PC-3 (cell line): ENCODE measurements at regions of chr1 and their contacts with region 1.

Region 1: GRCh38 chr1:186212544-186213226 is 162.4 kb downstream of the TPR start:
- DNase-seq: peak; percentile 82
- ATAC-seq: peak; percentile 82
- H3K4me3 ChIP-seq: no peak overlapping the region
- H3K27ac ChIP-seq: no peak overlapping the region
- H3K4me1 ChIP-seq: 0 out of 2 replicates have a peak, but pooled peaks cover 5% of the 10 kb centered on the region
- H3K27me3 ChIP-seq: no peaks in the 10 kb centered on the region
- CTCF ChIP-seq: peak; percentile 89

Region 2: DNA sequence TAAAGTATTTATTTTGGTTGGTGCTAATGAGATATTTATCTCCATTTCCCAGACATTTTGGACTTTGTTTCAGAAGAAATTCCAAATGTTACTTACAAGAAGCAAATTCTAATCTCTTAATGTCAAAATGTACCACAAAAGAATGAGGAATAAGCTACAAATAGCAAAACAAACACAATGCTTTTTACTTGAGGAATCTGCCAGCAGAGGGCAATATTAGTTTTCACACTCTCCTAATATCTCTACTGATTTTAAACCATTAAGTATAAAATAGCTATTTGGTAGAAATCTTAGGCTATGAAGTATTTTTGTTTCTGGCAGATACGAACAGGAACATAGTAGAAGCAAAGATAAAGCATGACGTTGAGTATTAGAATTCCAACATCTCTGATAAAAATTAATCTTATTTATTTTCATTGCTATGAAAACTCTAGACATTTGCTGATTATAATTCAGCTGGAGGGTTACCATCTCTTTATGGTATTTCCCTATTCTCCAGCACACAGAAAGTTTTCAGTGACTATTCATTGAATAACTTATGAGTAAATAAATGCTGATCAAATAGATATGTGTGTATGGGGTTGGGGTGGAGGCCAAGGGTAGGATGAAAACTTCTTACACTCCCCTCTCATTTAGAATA is 491.9 kb before region 1 on chr1:
- CTCF ChIA-PET with region 1: interaction called, 13 read pairs
- POLR2A ChIA-PET with region 1: no interaction called
- intact Hi-C with region 1: loop called (anchors 1 kb)
- DNase-seq: peak; percentile 49
- ATAC-seq: peak; percentile 35
- H3K4me3 ChIP-seq: no peak overlapping the region
- H3K27ac ChIP-seq: no peak overlapping the region
- H3K4me1 ChIP-seq: peaks cover 21% of the 10 kb centered on the region
- H3K27me3 ChIP-seq: no peaks in the 10 kb centered on the region
- CTCF ChIP-seq: peak; percentile 72

Region 3: GRCh38 chr1:185996211-185996610 is 216.5 kb before region 1 on chr1:
- CTCF ChIA-PET with region 1: interaction called, 3 read pairs
- POLR2A ChIA-PET with region 1: no interaction called
- intact Hi-C with region 1: loop called (anchors 5 kb)
- DNase-seq: peak; percentile 92
- ATAC-seq: peak; percentile 85
- H3K4me3 ChIP-seq: no peak overlapping the region
- H3K27ac ChIP-seq: no peak overlapping the region
- H3K4me1 ChIP-seq: peaks cover 14% of the 10 kb centered on the region
- H3K27me3 ChIP-seq: no peaks in the 10 kb centered on the region
- CTCF ChIP-seq: no peak

Region 4: DNA sequence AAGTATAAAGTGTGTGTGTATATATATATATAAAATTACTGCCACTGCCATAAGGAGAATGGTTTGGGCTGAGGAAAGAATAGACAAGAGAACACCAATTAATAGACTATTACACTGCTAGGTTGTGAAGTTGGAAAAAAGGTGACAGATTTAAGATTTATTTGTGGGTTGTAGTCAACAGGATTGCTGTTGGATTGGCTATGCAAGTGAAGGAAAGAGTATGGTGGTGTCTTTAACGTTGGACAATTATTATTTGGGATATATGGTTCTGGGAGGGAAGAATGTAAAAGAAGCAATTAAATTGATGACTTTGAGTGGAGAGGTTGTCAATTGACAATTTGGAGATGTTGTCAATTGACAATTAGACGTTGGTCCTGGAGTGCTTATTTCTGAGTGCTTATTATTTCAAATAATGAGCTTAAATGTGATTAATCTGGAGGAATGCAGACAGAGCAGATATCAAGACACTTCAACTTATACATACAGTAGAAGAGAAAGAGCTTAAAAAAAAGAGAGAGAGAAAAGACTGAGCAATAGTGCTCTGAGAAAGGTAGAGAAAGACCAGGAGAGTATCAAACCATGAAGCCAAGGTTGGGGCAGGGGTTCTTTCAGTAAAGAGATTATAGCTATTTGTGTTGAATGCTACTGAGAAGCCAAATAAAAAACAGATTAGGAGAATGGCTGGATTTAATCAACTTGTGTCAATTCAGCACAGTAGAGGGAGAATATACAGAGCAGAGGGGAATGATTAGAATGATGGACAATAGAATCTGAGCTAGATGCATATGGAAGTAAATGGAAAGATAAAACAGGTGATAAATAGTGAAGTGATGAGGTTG is 457.8 kb after region 1 on chr1:
- CTCF ChIA-PET with region 1: no interaction called
- POLR2A ChIA-PET with region 1: no interaction called
- intact Hi-C with region 1: no loop called
- DNase-seq: no peak
- ATAC-seq: no peak
- H3K4me3 ChIP-seq: no peak overlapping the region
- H3K27ac ChIP-seq: no peak overlapping the region
- H3K4me1 ChIP-seq: no peaks in the 10 kb centered on the region
- H3K27me3 ChIP-seq: no peaks in the 10 kb centered on the region
- CTCF ChIP-seq: no peak